ENCODE measurements at regions of chr17 and their contacts with region 1.

Region 1: GRCh38 chr17:45172454-45173286 is 11.0 kb downstream of the HEXIM2 start:
- DNase-seq: peak; percentile 87 to 90
- ATAC-seq: peak; percentile 69
- H3K4me3 ChIP-seq: peak overlapping the region; percentile 29 to 47
- H3K27ac ChIP-seq: peak overlapping the region; percentile 77 to 98
- H3K4me1 ChIP-seq: peaks cover 0 to 2% of the 10 kb centered on the region in 2 donors
- H3K27me3 ChIP-seq: no peaks in the 10 kb centered on the region

Region 2: GRCh38 chr17:45135192-45135977 is 37.3 kb before region 1 on chr17 and contains the start of gene ACBD4:
- intact Hi-C with region 1: no loop called
- DNase-seq: peak; percentile 96 to 98
- ATAC-seq: peak; percentile 91
- H3K4me3 ChIP-seq: peak within 1 kb of the TSS; percentile 58 to 75
- H3K27ac ChIP-seq: peak within 1 kb of the TSS in 1 of 2 donors; percentile 76
- H3K4me1 ChIP-seq: no peaks in the 10 kb centered on the region
- H3K27me3 ChIP-seq: no peaks in the 10 kb centered on the region
- total RNA-seq, gene ACBD4: 16.1 to 23.4 TPM

Region 3: GRCh38 chr17:45161019-45161825 is 11.4 kb before region 1 on chr17:
- intact Hi-C with region 1: loop called in 1 of 2 experiments (anchors 1 kb)
- DNase-seq: peak; percentile 99
- ATAC-seq: peak; percentile 97
- H3K4me3 ChIP-seq: peak overlapping the region; percentile 69 to 76
- H3K27ac ChIP-seq: peak overlapping the region; percentile 78 to 95
- H3K4me1 ChIP-seq: no peaks in the 10 kb centered on the region
- H3K27me3 ChIP-seq: no peaks in the 10 kb centered on the region